ENCODE measurements at regions of chr12 and their contacts with region 1.

Region 1: GRCh38 chr12:14239350-14239934 is 126.0 kb upstream of the ATF7IP start:
- DNase-seq: peak in 11 of 35 experiments; percentile 10 to 46 (median 21)
- ATAC-seq: peak; percentile 54 to 66 (median 64)
- H3K4me3 ChIP-seq: peak overlapping the region; percentile 45 to 46
- H3K4me3 Mint-ChIP-seq: peak overlapping the region; percentile 78 to 83 (median 82)
- H3K27ac ChIP-seq: peak overlapping the region; percentile 59
- H3K27ac Mint-ChIP-seq: peak overlapping the region; percentile 89 to 92
- H3K4me1 ChIP-seq: peaks cover 6 to 16% of the 10 kb centered on the region in 2 experiments
- H3K4me1 Mint-ChIP-seq: peaks cover 17 to 24% (median 22%) of the 10 kb centered on the region in 3 donors
- H3K27me3 ChIP-seq: no peaks in the 10 kb centered on the region
- H3K27me3 Mint-ChIP-seq: no peaks in the 10 kb centered on the region

Region 2: GRCh38 chr12:14007639-14008038 is 231.8 kb before region 1 on chr12:
- CTCF ChIA-PET with region 1: no interaction called
- POLR2A ChIA-PET with region 1: no interaction called
- DNase-seq: no peak
- ATAC-seq: no peak
- H3K4me3 ChIP-seq: no peak overlapping the region
- H3K4me3 Mint-ChIP-seq: no peak overlapping the region
- H3K27ac ChIP-seq: no peak overlapping the region
- H3K27ac Mint-ChIP-seq: no peak overlapping the region
- H3K4me1 ChIP-seq: no peaks in the 10 kb centered on the region
- H3K4me1 Mint-ChIP-seq: no peaks in the 10 kb centered on the region
- H3K27me3 ChIP-seq: no peaks in the 10 kb centered on the region
- H3K27me3 Mint-ChIP-seq: peaks cover 8 to 16% of the 10 kb centered on the region in 2 donors

Region 3: DNA sequence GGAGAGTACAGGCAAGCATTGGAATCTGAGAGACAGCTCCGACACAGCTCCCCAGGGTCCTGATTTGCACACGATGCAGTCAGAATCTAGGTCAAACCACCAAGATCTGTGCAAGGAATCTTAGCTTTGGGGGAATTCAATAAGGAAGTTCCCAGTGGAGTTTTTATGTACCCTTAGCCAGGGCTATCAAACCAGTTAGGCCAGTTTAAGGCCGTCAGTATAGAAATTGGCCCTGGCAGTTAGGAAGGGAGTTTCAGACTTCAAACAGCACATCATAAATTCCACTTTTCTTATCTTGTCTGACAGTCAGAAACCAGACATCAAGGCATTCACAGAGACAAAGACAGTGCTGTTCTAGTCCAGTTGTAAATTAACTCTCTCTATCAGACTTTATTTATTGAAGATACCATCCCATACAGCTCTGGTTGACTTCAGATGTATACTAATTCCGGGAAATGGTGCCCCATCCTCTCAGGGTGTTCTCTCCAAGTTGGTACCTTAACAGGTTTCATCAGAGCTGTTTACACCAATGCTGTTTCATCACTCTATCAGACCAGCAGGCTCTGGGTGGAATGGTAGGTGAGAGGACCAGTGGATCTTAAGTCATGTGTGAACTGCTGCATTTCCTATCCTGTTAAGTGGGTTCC is 31.4 kb before region 1 on chr12:
- CTCF ChIA-PET with region 1: no interaction called
- POLR2A ChIA-PET with region 1: no interaction called
- DNase-seq: no peak
- ATAC-seq: no peak
- H3K4me3 ChIP-seq: no peak overlapping the region
- H3K4me3 Mint-ChIP-seq: no peak overlapping the region
- H3K27ac ChIP-seq: no peak overlapping the region
- H3K27ac Mint-ChIP-seq: no peak overlapping the region
- H3K4me1 ChIP-seq: no peaks in the 10 kb centered on the region
- H3K4me1 Mint-ChIP-seq: no peaks in the 10 kb centered on the region
- H3K27me3 ChIP-seq: no peaks in the 10 kb centered on the region
- H3K27me3 Mint-ChIP-seq: no peaks in the 10 kb centered on the region

Region 4: DNA sequence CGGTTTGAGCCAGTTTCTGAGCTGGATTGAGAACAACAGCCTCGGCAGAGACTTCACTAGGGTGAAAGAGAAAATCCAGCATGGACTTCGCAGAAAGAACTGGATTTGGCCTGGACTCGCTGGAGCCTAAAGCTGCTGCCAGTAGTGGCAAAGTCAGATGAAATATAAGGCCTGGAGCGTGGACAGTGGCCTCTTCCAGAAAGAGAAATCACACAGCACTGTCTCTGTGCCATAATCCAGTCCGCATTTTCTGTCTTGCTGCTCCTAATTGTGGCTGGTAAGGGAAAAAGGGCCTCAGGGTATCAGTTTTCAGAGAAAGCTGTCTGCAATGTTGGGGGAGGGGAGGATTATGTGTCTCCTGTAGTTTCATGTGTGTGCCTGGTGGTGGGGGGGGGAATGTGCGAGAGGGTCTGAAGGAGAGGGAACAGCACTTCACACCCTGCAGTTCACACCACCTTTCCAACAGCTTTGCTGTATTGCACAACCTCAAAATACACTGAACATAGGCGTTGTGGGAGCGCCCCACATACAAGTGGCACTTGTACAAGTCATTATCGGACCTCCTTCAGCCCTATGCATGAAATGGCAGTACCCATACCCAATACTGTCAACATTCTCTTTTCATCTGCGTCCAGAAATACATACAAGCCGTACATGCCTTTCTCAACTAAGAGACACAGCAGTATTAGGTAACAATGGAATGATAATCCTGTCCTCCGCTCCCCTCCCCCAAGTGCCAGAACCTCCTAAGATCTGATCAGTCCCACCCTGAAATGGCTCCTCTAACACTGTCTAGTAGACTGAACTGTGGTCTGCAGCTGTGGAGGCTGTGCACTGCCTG is 18.5 kb after region 1 on chr12:
- CTCF ChIA-PET with region 1: interaction called, 10 to 12 read pairs
- POLR2A ChIA-PET with region 1: no interaction called
- DNase-seq: peak in 34 of 35 experiments; percentile 52 to 86 (median 75)
- ATAC-seq: peak; percentile 48 to 67 (median 53)
- H3K4me3 ChIP-seq: peak overlapping the region in 1 of 2 donors; percentile 2
- H3K4me3 Mint-ChIP-seq: peak overlapping the region; percentile 60 to 71 (median 60)
- H3K27ac ChIP-seq: peak overlapping the region; percentile 95
- H3K27ac Mint-ChIP-seq: peak overlapping the region; percentile 98
- H3K4me1 ChIP-seq: peaks cover 13 to 43% of the 10 kb centered on the region in 2 experiments
- H3K4me1 Mint-ChIP-seq: peaks cover 57 to 58% (median 57%) of the 10 kb centered on the region in 3 donors
- H3K27me3 ChIP-seq: no peaks in the 10 kb centered on the region
- H3K27me3 Mint-ChIP-seq: no peaks in the 10 kb centered on the region

Region 5: DNA sequence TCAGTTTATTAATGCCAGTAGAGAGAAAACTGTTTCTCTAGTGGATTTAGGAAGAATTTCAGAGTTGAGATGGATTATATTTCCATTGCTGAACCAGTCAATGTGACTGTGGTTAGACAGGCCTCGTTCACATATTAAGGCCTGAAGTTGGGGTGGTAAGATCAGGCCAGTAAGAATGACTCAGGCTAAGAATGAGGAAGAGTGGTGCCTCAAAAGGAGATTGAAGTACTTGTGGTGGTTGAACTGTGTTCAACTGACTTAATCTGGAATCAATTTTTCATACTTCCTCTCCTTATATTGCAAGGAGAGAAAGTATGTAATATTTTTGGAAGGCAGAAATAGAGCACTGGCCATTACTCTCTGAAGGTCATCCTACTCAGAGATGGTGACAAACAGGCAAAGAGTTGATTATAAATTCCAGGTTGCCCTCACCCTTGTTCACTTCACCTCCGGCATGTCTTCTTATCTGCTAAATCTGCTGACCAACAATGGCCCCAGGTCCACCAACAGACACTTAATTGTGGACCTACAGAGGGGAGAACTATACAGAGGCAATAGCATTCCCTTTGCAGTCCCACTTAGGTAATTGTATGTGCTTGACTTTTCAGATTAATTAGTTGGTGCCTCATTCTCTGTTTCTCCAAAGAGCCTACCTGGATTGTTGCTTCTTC is 88.4 kb after region 1 on chr12:
- CTCF ChIA-PET with region 1: no interaction called
- POLR2A ChIA-PET with region 1: no interaction called
- DNase-seq: no peak
- ATAC-seq: no peak
- H3K4me3 ChIP-seq: no peak overlapping the region
- H3K4me3 Mint-ChIP-seq: no peak overlapping the region
- H3K27ac ChIP-seq: no peak overlapping the region
- H3K27ac Mint-ChIP-seq: no peak overlapping the region
- H3K4me1 ChIP-seq: no peaks in the 10 kb centered on the region
- H3K4me1 Mint-ChIP-seq: no peaks in the 10 kb centered on the region
- H3K27me3 ChIP-seq: no peaks in the 10 kb centered on the region
- H3K27me3 Mint-ChIP-seq: no peaks in the 10 kb centered on the region

Region 6: DNA sequence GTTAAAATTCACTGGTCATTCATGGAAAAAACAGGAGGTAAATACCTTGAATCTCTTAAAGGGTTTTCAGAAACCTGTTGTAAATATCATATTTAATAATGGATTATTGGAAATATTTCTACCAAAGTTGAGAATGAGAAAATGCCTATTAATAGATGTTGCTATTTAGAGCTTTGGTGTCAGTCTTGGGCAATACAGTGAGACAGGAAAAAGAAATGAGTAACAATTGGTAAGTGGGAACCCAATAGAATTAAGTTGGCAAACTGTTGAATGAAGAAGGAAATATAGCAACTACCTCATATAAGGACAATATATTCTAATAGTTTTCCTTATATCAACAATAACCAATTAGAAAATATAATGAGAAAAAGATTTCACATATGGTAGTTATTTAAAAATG is 204.1 kb after region 1 on chr12:
- CTCF ChIA-PET with region 1: interaction called in 1 of 2 experiments, 3 read pairs
- POLR2A ChIA-PET with region 1: interaction called in 1 of 2 experiments, 12 read pairs
- DNase-seq: no peak
- ATAC-seq: no peak
- H3K4me3 ChIP-seq: no peak overlapping the region
- H3K4me3 Mint-ChIP-seq: no peak overlapping the region
- H3K27ac ChIP-seq: no peak overlapping the region
- H3K27ac Mint-ChIP-seq: peak overlapping the region; percentile 58 to 75
- H3K4me1 ChIP-seq: no peaks in the 10 kb centered on the region
- H3K4me1 Mint-ChIP-seq: peaks cover 40 to 55% (median 52%) of the 10 kb centered on the region in 3 donors
- H3K27me3 ChIP-seq: no peaks in the 10 kb centered on the region
- H3K27me3 Mint-ChIP-seq: no peaks in the 10 kb centered on the region

Region 7: DNA sequence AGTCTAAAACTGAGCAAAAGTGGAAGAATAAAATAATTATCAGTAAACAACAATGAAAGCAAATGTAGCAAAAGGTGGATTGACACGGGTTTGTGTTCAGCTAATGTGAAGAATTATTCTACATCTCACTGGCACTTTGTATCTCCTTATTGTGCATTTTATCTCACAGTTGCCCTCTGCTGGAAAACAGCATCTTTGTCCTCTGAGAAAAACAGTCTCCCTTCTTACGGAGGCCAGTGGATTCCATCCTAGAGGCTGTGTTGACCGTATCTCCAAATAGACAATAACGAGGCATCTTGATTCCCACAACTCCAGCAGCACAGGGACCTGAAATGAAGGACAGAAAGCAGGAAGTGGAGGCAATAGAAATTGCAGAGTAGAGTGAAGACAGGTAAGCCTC is 379.5 kb after region 1 on chr12:
- CTCF ChIA-PET with region 1: interaction called, 8 to 27 read pairs
- POLR2A ChIA-PET with region 1: no interaction called
- DNase-seq: peak in 1 of 35 experiments; percentile 44
- ATAC-seq: no peak
- H3K4me3 ChIP-seq: no peak overlapping the region
- H3K4me3 Mint-ChIP-seq: no peak overlapping the region
- H3K27ac ChIP-seq: no peak overlapping the region
- H3K27ac Mint-ChIP-seq: no peak overlapping the region
- H3K4me1 ChIP-seq: no peaks in the 10 kb centered on the region
- H3K4me1 Mint-ChIP-seq: peaks cover 2 to 8% (median 7%) of the 10 kb centered on the region in 3 donors
- H3K27me3 ChIP-seq: no peaks in the 10 kb centered on the region
- H3K27me3 Mint-ChIP-seq: peaks cover 4 to 13% of the 10 kb centered on the region in 2 donors

Region 8: GRCh38 chr12:14716848-14717444 is 477.5 kb after region 1 on chr12:
- CTCF ChIA-PET with region 1: interaction called, 4 to 11 read pairs
- POLR2A ChIA-PET with region 1: no interaction called
- DNase-seq: peak in 32 of 35 experiments; percentile 1 to 75 (median 30)
- ATAC-seq: peak in 3 of 4 experiments; percentile 56 to 71 (median 69)
- H3K4me3 ChIP-seq: no peak overlapping the region
- H3K4me3 Mint-ChIP-seq: no peak overlapping the region
- H3K27ac ChIP-seq: no peak overlapping the region
- H3K27ac Mint-ChIP-seq: no peak overlapping the region
- H3K4me1 ChIP-seq: no peaks in the 10 kb centered on the region
- H3K4me1 Mint-ChIP-seq: peaks cover 0 to 2% (median 0%) of the 10 kb centered on the region in 3 donors
- H3K27me3 ChIP-seq: no peaks in the 10 kb centered on the region
- H3K27me3 Mint-ChIP-seq: peaks cover under 1 to 6% of the 10 kb centered on the region in 2 donors